ENCODE measurements at regions of chr2 and their contacts with region 1.

Region 1: GRCh38 chr2:62787386-62787785 is 81.9 kb downstream of the EHBP1 start:
- DNase-seq: peak; percentile 31
- H3K4me3 ChIP-seq: no peak overlapping the region
- H3K27ac ChIP-seq: no peak overlapping the region
- H3K4me1 ChIP-seq: no peaks in the 10 kb centered on the region; a peak in 2 of 4 replicates
- H3K27me3 ChIP-seq: no peaks in the 10 kb centered on the region
- CTCF ChIP-seq: peak; percentile 52
- EP300 ChIP-seq: no peak
- RAD21 ChIP-seq: peak; percentile 82

Region 2: GRCh38 chr2:62577994-62578781 is 209.2 kb before region 1 on chr2:
- CTCF ChIA-PET with region 1: no interaction called
- POLR2A ChIA-PET with region 1: no interaction called
- DNase-seq: no peak
- H3K4me3 ChIP-seq: no peak overlapping the region
- H3K27ac ChIP-seq: peak overlapping the region; percentile 71 to 93
- H3K4me1 ChIP-seq: peaks cover 0 to 26% of the 10 kb centered on the region in 2 experiments; a peak in 2 of 4 replicates
- H3K27me3 ChIP-seq: no peaks in the 10 kb centered on the region
- CTCF ChIP-seq: no peak
- EP300 ChIP-seq: peak; percentile 71 to 98
- RAD21 ChIP-seq: no peak

Region 3: DNA sequence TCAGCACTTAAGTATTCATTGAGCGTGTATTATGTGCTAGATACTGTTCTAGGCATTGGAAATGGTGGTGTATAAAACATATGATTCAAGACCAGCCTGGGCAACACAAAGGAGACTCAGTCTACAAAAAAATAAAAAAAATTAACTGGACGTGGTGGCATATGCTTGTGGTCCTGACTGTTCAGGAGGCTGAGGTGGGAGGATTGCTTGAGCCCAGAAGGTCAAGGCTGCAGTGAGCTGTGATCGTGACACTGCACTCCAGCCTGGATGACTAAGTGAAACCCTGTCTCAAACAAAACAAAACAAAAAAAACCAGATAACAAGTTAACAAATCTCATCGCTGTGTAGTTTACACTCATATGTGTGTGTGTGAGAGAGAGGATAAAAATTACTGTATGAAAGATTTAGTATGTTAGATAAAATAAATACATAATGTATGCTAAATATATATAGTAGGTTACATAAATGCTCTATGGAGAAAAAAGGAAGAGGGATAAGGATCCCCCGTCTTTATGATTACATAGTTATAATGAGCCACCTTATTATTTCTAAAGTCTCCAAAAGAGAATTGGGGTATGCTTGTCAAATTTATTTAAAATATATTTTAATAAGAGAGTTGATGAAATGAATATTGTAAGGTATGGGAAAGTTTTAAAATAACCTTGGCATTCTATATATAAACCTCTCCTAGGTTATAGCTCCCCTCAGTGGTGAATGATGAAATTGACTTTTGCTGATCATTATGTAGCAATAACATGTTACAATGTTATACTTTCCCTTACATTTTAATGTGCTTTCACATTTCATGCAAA is 12.6 kb before region 1 on chr2:
- CTCF ChIA-PET with region 1: interaction called, 14 read pairs
- POLR2A ChIA-PET with region 1: no interaction called
- DNase-seq: peak; percentile 19
- H3K4me3 ChIP-seq: peak overlapping the region in 1 of 2 experiments; percentile 38; a peak in 1 of 4 replicates
- H3K27ac ChIP-seq: peak overlapping the region in 1 of 2 experiments; percentile 55; a peak in 3 of 4 replicates
- H3K4me1 ChIP-seq: no peaks in the 10 kb centered on the region
- H3K27me3 ChIP-seq: no peaks in the 10 kb centered on the region
- CTCF ChIP-seq: peak; percentile 86
- EP300 ChIP-seq: no peak
- RAD21 ChIP-seq: peak; percentile 88

Region 4: DNA sequence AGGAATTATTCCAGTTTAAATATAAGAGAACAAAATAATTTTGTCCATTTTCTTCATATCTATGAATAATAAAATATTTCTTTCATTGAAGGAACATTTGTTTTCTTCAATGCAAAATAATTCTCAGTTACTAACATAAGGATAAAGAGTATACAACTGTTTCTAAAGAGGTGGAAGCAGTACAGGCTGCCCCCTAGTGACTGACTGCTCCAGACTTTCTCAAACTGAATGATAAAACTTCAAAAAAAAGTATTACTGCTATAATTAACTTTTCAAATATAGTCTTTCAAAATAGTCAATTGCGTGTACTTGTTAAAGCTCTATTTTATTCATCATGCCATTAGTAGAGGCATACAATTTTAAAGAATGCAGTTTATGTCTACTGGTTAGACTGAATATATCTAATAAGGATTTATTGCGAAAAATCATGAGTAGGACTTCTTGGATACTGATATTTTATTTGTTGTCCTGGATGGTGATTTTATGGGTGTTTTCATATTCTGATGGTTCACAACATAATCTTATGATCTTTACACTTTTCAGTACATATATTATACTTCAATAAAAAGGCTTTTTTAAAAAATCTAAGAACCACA is 700.8 kb after region 1 on chr2:
- CTCF ChIA-PET with region 1: interaction called, 34 read pairs
- POLR2A ChIA-PET with region 1: no interaction called
- DNase-seq: peak; percentile 29
- H3K4me3 ChIP-seq: no peak overlapping the region
- H3K27ac ChIP-seq: no peak overlapping the region
- H3K4me1 ChIP-seq: no peaks in the 10 kb centered on the region
- H3K27me3 ChIP-seq: no peaks in the 10 kb centered on the region
- CTCF ChIP-seq: peak; percentile 86
- EP300 ChIP-seq: no peak
- RAD21 ChIP-seq: peak; percentile 72

Measured in SK-N-SH (cell line).